Heart right ventricle (tissue), 16 donors: ENCODE measurements at regions of chr11 and their contacts with region 1.

Region 1: DNA sequence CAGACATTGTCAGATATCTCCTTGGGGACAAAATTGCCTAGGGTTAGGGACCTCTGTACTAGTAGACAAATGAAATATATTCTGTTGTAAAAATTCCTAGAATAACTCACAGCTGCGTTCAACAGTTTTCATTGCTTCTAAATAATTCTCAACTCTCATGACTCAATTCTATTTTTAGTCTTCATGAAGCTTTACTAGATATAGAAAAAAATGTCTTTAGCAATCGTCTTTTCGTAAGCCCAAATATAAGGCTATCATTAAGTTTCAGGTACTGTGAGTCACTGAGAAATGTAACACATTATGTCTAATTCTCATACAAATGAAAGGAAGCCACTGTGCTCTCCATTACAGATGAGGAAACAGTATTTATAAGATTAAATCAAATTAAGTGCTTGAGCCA is 6.4 kb downstream of the MMP12 start:
- DNase-seq: no peak
- ATAC-seq: no peak
- H3K4me3 ChIP-seq: no peak overlapping the region
- H3K27ac ChIP-seq: no peak overlapping the region
- H3K4me1 ChIP-seq: no peaks in the 10 kb centered on the region
- H3K27me3 ChIP-seq: no peaks in the 10 kb centered on the region
- CTCF ChIP-seq: no peak

Region 2: DNA sequence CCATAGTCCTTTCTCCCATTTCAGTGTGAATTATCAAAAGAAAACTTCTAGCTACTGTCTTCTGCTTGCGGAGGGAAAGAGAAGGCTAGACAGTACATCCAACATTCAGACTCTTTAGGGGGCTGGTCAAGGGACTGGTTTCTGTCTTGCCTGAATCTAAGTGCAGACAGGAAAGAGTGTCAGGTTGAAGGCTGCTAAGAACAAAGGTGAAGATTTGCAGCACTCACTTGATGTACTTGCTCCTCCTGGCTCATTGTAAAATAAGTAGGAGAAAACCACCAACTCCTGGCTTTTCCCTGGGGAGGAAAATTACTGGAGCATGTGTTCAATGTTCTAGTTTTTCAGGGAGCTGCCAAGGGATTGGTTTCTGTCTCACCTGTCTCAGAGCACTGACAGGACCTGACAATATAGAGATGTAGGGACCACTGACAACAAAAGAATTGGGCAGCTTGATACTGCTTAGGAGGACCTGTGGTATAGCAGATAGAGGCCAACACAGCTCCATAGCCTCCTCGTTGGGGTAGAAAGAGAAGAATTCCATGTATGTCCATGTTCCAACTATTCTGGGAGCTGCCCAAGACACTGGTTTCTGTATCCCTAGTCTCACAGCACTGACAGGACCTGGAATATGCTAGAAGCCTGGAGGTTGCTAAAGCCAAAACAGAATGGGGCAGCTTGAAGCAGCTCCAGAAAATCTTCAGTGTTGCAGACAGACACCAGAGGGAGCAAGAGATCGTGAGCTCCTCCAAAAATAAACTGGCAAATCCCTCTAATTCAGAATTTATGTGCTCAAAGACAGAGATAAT is 46.1 kb after region 1 on chr11:
- intact Hi-C with region 1: no loop called
- DNase-seq: no peak
- ATAC-seq: peak in 2 of 8 donors; percentile 38 to 52
- H3K4me3 ChIP-seq: no peak overlapping the region
- H3K27ac ChIP-seq: no peak overlapping the region
- H3K4me1 ChIP-seq: peaks cover 0 to under 1% (median 0%) of the 10 kb centered on the region in 9 donors
- H3K27me3 ChIP-seq: peaks cover 0 to 4% (median 0%) of the 10 kb centered on the region in 7 donors
- CTCF ChIP-seq: peak in 8 of 9 donors; percentile 15 to 59 (median 51)

Region 3: GRCh38 chr11:104219096-104219495 is 1350.8 kb after region 1 on chr11:
- intact Hi-C with region 1: loop called in 1 of 10 experiments (anchors 10 kb)
- DNase-seq: peak in 1 of 2 donors; percentile 9
- ATAC-seq: peak in 7 of 8 donors; percentile 28 to 90 (median 65)
- H3K4me3 ChIP-seq: no peak overlapping the region
- H3K27ac ChIP-seq: no peak overlapping the region
- H3K4me1 ChIP-seq: no peaks in the 10 kb centered on the region
- H3K27me3 ChIP-seq: no peaks in the 10 kb centered on the region
- CTCF ChIP-seq: no peak